Motor neuron (in vitro differentiated cells): ENCODE measurements at regions of chr15 and their contacts with region 1.

Region 1: GRCh38 chr15:57158589-57158988 is 217.7 kb upstream of the CGNL1 start:
- ATAC-seq: peak in 5 of 8 experiments; percentile 26 to 51 (median 33)
- H3K4me3 ChIP-seq: no peak overlapping the region
- H3K27ac ChIP-seq: no peak overlapping the region
- H3K4me1 ChIP-seq: peaks cover 0 to 4% of the 10 kb centered on the region in 2 donors

Region 2: GRCh38 chr15:57205996-57206395 is 47.4 kb after region 1 on chr15:
- in situ Hi-C with region 1: loop called in 2 of 9 experiments (anchors 10 kb)
- ATAC-seq: peak in 1 of 8 experiments; percentile 81
- H3K4me3 ChIP-seq: no peak overlapping the region
- H3K27ac ChIP-seq: no peak overlapping the region
- H3K4me1 ChIP-seq: no peaks in the 10 kb centered on the region

Region 3: GRCh38 chr15:57213862-57214261 is 55.3 kb after region 1 on chr15:
- in situ Hi-C with region 1: loop called in 2 of 9 experiments (anchors 10 kb)
- ATAC-seq: peak; percentile 77 to 89 (median 82)
- H3K4me3 ChIP-seq: no peak overlapping the region
- H3K27ac ChIP-seq: no peak overlapping the region
- H3K4me1 ChIP-seq: peaks cover 22 to 48% of the 10 kb centered on the region in 2 donors